Right ventricle myocardium superior (tissue), 1 donor: ENCODE measurements at regions of chr4 and their contacts with region 1.

Region 1: GRCh38 chr4:37826295-37827029 is at the start of gene PGM2:
- DNase-seq: peak; percentile 95
- ATAC-seq: peak; percentile 96
- total RNA-seq, gene PGM2: 15.6 TPM

Region 2: GRCh38 chr4:37891260-37892159 is 65.0 kb after region 1 on chr4:
- intact Hi-C with region 1: loop called (anchors 5 kb)
- DNase-seq: peak; percentile 50
- ATAC-seq: peak; percentile 35